Heart left ventricle (tissue), 16 donors: ENCODE measurements at regions of chr6 and their contacts with region 1.

Region 1: DNA sequence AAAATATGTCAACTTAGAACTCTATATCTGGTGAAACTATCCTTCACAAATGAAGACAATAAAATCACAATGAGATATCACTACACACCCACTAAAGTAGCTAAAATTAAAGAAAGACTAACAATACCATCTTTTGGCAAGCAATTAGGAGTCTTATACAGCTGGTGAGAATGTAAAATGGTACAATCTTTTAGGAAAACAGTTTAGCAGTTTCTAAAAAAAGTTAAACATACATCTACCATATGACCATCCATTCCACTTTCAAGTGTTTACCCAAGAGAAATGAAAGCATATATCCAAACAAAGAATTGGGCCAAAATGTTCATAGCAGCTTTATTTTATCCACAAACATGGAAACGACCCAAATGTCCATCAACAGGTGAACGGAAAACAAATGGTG is 13.8 kb upstream of the EEF1A1 start:
- DNase-seq: no peak
- ATAC-seq: no peak
- H3K4me3 ChIP-seq: no peak overlapping the region
- H3K27ac ChIP-seq: no peak overlapping the region
- H3K4me1 ChIP-seq: no peaks in the 10 kb centered on the region
- H3K27me3 ChIP-seq: no peaks in the 10 kb centered on the region
- CTCF ChIP-seq: no peak
- POLR2A ChIP-seq: no peak

Region 2: DNA sequence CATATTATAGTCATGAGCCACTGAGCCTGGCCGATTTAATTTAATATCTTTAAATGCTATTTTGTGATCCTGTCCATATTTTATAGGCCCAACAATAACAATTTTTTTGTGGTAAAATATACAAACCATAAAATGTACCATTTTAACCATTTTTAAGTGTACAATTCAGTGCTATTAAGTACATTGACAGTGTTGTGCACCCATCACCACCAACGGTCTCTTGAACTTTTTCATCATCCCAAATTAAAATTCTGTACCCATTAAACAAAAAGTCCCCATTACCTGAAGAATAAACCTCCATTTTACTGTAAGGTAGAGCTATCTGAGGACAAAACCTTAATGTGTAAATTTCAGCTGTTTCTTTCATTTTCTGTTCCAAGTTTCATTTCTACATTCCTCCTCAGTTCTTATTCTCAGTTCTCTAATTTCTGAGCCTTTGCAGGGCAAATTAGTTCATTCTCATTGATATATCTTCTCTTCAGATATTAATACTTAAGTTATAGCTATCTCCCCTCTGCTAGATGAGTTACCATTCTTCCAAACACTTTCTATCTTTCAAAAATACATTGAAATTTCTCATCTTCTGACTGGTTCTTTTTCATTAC is 62.8 kb before region 1 on chr6:
- intact Hi-C with region 1: no loop called
- DNase-seq: no peak
- ATAC-seq: no peak
- H3K4me3 ChIP-seq: no peak overlapping the region
- H3K27ac ChIP-seq: peak overlapping the region in 1 of 12 donors; percentile 76
- H3K4me1 ChIP-seq: peaks cover 0 to 22% (median 0%) of the 10 kb centered on the region in 12 donors
- H3K27me3 ChIP-seq: no peaks in the 10 kb centered on the region
- CTCF ChIP-seq: no peak
- POLR2A ChIP-seq: no peak

Region 3: DNA sequence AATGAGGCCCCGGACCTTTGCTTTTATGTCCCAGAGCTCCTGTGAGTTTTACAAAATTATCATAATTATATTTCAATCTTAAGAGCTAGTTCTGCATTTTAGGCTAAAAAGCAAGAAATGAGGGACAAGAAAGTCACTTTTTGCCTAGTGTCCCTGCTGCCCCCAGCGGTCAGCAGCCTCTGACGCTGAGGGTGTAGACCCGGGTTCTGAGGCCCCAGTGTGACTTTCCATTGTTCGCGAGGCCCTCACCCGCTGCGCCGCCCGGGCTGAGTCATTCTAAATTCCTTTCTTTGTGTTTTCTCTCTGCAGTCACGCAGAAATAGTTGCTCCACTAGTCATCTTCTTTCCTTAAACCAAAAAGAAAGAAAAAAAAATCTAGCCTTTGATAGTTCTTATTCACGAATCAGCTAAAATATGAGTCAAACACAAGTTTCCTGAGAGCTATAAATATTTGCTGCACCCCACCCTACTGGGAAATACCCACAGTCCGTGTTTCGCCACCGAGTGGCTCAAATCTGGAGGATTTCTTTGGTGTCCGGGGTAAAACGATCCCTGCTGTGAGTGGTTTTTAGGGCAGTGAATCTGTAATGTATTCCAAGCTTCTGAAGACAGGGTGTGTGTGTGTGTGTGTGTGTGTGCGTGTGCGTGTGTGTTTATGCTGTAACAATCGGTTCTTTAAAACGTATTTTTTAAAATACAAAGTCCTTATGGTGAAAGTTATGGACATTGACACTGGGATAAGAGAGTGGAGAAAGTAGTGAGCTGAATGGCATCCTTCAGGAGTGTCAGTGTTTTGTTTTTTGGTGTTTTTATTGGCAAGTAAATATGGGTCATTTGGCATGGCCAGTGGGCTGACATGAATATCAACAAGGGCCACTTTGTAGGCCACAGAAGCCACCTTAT is 45.9 kb after region 1 on chr6:
- intact Hi-C with region 1: loop called in 2 of 10 experiments (anchors 2 to 10 kb)
- DNase-seq: peak; percentile 75 to 88 (median 78)
- ATAC-seq: peak; percentile 80 to 97 (median 95)
- H3K4me3 ChIP-seq: peak overlapping the region in 9 of 12 donors; percentile 18 to 48 (median 35)
- H3K27ac ChIP-seq: peak overlapping the region; percentile 75 to 96 (median 92)
- H3K4me1 ChIP-seq: peaks cover 7 to 51% (median 19%) of the 10 kb centered on the region in 12 donors
- H3K27me3 ChIP-seq: no peaks in the 10 kb centered on the region
- CTCF ChIP-seq: peak in 10 of 12 donors; percentile 12 to 56 (median 39)
- POLR2A ChIP-seq: peak in 1 of 2 donors; percentile 69

Region 4: DNA sequence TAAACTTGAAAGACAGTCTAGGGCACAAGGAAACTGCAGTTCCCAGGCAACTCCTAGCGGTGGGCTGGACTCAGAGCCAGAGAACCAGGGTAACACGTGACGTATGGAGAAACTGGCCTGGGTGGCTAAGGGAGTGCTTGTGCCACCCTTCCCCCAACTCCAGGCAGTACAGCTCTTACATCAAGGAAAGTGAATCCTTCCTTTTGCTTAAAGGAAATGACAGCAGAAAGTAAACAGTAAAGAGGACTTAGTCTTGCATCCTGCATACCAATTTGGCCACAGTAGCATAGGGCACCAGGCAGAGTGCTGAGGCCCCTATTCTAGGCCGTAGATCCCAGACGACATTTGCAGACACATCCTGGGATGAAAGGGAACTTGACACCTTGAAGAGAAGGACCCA is 484.2 kb after region 1 on chr6:
- intact Hi-C with region 1: no loop called
- DNase-seq: no peak
- ATAC-seq: no peak
- H3K4me3 ChIP-seq: no peak overlapping the region
- H3K27ac ChIP-seq: no peak overlapping the region
- H3K4me1 ChIP-seq: no peaks in the 10 kb centered on the region
- H3K27me3 ChIP-seq: no peaks in the 10 kb centered on the region
- CTCF ChIP-seq: no peak
- POLR2A ChIP-seq: no peak